Activated CD4-positive, alpha-beta T cell treated with anti-CD3 and anti-CD28 coated beads, Interleukin-2, amount 10 ng/mL, durations not matched to agents 7 days and 5 days (primary cell): ENCODE measurements at regions of chr5 and their contacts with region 1.

Region 1: DNA sequence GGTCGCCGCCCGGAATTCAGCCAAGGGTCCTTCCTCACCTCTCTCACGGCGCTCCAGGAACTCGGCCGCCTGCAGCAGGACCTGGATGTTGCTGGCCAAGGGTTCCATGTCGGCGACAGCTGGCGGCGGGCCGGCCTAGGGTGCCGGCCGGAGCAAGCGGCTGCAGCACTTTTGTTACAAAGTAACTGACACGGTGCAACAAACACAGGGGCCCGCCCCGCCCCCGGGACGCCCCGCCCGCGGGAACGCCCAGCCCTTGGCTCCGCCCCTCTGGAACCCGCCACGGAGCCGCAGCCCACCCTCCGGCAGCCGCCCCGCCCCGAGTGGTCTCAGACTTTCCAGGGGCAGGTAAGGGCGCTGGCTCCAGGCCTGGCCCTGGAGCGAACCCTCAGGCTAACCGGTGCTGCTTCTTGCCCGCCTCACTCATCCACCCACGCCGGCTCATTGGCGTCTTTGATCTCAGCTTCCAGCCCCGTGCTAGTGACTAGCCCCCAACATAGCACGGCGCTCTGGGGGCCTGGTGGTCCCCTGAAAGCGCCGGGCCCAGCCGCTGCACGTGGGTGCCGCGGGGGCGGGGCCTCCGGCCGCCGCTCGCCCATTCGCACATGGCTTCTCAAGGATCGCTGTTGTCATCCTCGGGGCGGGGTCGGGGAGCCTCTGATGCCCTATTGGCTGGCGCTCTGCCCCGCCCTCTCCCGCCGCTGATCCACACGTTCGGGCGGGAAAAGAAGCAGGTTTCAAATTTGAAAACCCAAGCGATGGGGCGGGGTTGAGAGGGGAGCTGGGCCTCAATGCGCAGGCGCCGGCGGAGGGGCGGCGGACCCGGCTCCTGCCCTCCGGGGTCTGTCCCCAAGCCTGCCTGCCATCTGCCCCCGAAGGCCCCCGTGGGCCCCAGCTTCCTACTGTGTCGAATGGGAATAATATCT is at the start of gene MXD3:
- DNase-seq: peak; percentile 99
- H3K4me3 Mint-ChIP-seq: peak within 1 kb of the TSS; percentile 97
- H3K27ac Mint-ChIP-seq: peak within 1 kb of the TSS; percentile 96
- H3K4me1 Mint-ChIP-seq: peaks cover 55% of the 10 kb centered on the region
- H3K27me3 Mint-ChIP-seq: no peaks in the 10 kb centered on the region
- total RNA-seq, gene MXD3: 107 to 109 TPM

Region 2: GRCh38 chr5:177094224-177095087 is 217.5 kb before region 1 on chr5:
- CTCF ChIA-PET with region 1: no interaction called
- POLR2A ChIA-PET with region 1: no interaction called
- DNase-seq: no peak
- H3K4me3 Mint-ChIP-seq: no peak overlapping the region
- H3K27ac Mint-ChIP-seq: no peak overlapping the region
- H3K4me1 Mint-ChIP-seq: no peaks in the 10 kb centered on the region
- H3K27me3 Mint-ChIP-seq: no peaks in the 10 kb centered on the region

Region 3: DNA sequence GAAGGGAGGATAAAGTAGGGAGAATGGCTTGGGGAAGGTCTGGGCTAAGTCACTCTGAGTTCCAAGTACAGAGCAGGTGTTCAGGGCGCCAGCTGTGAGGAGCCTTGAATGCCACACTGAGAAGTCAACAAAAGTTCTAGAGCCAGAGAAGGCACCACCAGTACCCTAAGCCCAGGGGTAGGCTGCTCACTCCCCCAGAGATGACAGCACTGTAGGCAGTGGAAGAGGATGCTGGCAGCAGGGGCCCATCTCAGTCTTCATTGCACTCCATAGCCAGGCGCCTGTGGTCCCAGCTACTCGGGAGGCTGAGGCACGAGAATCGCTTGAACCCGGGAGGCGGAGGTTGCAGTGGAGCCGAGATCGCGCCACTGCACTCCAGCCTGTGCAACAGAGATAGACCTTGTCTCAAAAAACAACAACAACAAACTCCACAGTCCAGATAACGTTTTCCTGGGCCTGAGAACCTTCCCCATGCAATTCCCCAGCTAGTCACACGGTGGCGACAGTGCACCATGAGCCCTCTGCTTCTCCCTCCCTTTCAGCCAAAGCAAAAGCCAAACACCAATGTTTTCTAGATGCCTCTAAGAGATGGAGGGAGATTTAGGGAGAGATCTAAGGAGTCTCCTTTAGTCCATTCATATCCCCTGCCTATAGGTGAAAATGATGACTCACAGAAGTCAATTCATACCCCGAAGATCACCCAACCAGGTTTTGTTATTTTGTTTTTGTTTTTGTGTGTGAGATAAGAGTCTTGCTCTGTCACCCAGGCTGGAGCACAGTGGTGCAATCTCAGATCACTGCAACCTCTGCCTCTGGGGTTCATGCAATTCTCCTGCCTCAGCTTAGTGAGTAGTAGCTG is 198.2 kb before region 1 on chr5:
- CTCF ChIA-PET with region 1: interaction called, 16 read pairs
- POLR2A ChIA-PET with region 1: no interaction called
- DNase-seq: peak; percentile 81
- H3K4me3 Mint-ChIP-seq: no peak overlapping the region
- H3K27ac Mint-ChIP-seq: peak overlapping the region; percentile 68
- H3K4me1 Mint-ChIP-seq: peaks cover 37% of the 10 kb centered on the region
- H3K27me3 Mint-ChIP-seq: no peaks in the 10 kb centered on the region

Region 4: DNA sequence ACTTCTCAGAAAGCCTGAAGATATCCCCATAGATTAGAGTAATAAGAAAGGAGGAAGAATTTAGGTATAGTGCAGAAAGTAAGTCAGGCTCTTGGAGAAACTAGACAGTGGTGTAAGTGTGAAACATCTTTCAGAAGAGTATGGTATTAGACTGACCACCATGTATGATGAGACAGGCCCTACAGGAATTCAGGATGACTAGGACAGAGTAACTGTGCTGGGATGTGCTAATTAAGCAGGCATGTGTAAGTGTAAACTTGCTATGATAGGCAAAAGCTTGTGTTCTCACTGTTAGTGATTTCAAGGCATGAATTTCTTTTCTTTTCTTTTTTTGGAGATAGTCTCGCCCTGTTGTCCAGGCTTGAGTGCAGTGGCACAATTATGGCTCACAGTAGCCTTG is 79.2 kb before region 1 on chr5:
- CTCF ChIA-PET with region 1: no interaction called
- POLR2A ChIA-PET with region 1: no interaction called
- DNase-seq: no peak
- H3K4me3 Mint-ChIP-seq: no peak overlapping the region
- H3K27ac Mint-ChIP-seq: peak overlapping the region; percentile 10
- H3K4me1 Mint-ChIP-seq: peaks cover 2% of the 10 kb centered on the region
- H3K27me3 Mint-ChIP-seq: no peaks in the 10 kb centered on the region

Region 5: DNA sequence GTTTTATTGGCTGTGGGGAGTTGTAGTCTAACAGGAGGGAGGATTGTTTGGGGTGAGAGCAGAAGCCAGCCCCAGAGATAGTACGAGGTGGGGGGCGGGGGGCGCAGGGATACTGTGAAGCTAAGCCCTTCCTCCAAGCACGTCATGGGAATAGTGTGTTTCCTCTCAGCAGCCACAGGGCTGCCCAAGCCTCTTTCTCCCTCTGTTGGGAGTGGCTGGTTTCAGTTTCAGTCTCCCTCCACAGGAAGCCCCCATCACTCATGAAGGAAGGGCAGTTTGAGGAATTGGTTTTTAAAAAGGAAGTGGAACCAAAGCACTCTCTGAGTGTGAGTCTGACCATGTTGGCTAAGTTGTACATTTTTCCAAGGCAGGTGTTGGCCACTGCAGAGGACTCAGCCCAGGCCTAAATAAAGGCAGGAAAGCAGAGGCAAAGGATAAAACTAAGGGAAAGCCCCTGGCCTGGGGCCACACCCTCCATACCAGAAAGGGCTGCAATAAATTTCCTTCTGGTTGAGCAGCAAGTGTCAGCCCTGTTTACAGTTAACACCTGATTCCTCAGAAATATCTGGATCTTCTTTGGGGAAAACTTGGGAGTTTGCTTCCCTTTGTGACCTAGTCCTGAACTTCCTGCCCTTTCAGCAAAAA is 11.6 kb before region 1 on chr5:
- CTCF ChIA-PET with region 1: interaction called, 30 read pairs
- POLR2A ChIA-PET with region 1: interaction called, 3 read pairs
- DNase-seq: peak; percentile 74
- H3K4me3 Mint-ChIP-seq: peak overlapping the region; percentile 55
- H3K27ac Mint-ChIP-seq: peak overlapping the region; percentile 89
- H3K4me1 Mint-ChIP-seq: peaks cover 83% of the 10 kb centered on the region
- H3K27me3 Mint-ChIP-seq: no peaks in the 10 kb centered on the region

Region 6: DNA sequence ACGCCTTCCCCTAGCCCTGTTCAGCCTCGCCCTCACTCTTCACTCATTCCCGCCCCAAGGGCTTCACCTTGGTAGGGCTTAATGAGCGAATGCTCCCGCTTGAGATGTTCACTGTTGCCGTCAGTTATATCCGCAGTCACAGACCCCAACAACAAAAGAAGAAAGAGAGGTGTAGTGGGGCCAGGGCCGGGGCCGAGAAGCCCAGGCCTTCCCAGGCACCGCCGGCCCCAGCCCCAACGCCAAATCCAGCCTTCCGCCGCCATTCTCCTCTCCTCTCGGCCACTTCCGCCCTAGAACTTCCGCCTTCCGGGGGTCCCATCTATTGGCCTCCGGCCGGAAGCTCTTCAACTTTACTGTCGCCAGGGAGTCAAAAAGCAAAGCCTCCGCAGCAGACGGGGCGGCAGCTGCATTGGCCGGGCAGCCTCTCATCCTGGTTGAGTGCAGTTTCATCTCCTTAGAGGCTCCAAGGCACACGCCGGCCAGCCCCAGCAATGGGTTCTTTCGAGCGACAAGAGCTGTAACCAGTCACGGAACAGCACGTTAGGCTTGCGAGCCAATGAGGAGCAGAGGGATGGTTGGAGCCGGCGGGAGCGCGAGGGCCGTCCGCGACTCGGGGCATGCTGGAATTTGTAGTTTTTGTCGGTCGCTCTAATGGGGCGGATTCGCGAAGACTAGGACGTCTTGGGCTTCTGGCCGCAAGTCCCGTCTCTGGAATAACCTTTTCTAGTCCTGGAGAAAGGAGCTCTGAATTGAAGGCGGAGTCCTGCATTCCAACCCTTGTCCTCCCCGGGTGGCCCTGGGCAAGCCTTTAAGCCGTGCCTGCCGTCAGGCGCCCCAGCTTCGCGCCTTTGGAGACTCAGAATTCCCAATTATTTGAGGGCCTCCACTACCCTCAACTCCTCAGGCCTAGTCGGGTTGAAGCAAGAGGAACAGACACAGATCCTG is 39.7 kb after region 1 on chr5 and contains the start of gene LMAN2:
- CTCF ChIA-PET with region 1: interaction called, 11 read pairs
- POLR2A ChIA-PET with region 1: interaction called, 3 read pairs
- DNase-seq: peak; percentile 95
- H3K4me3 Mint-ChIP-seq: peak within 1 kb of the TSS; percentile 93
- H3K27ac Mint-ChIP-seq: peak within 1 kb of the TSS; percentile 100
- H3K4me1 Mint-ChIP-seq: peaks cover 75% of the 10 kb centered on the region
- H3K27me3 Mint-ChIP-seq: no peaks in the 10 kb centered on the region
- total RNA-seq, gene LMAN2: 123 to 132 TPM

Region 7: GRCh38 chr5:177370488-177371119 is 58.6 kb after region 1 on chr5:
- CTCF ChIA-PET with region 1: interaction called, 16 read pairs
- POLR2A ChIA-PET with region 1: no interaction called
- DNase-seq: peak; percentile 56
- H3K4me3 Mint-ChIP-seq: peak overlapping the region; percentile 36
- H3K27ac Mint-ChIP-seq: peak overlapping the region; percentile 36
- H3K4me1 Mint-ChIP-seq: peaks cover 66% of the 10 kb centered on the region
- H3K27me3 Mint-ChIP-seq: no peaks in the 10 kb centered on the region